CD8-positive, alpha-beta memory T cell (primary cell): ENCODE measurements at regions of chr6 and their contacts with region 1.

Region 1: DNA sequence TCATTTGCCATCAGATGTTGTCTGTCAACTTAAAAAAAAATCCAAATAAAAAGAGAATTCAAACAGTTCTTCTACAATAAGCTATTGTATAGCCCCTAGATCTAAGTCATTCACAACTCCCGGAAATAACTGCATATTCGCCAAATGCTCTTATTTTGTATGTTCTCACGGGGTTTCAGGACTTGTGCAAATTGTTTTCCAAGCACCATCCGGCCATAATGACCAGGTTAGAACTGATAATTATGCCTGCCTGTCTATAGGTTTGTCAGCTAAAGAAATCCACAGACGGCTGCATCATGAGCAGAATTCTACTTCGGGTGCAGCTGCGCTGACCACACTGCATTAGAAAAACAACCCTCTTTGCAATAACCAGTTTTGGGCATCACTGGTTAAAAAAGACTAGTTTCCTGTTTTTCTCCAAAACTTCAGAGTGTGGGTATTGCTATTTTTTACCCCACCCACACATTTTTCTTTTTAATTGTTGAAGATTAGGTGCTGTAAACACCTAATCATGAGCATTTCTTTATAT is 87.7 kb downstream of the HIVEP2 start:
- DNase-seq: peak in 1 of 5 donors; percentile 70
- H3K4me3 ChIP-seq: peak overlapping the region; percentile 52
- H3K4me3 Mint-ChIP-seq: peak overlapping the region; percentile 75 to 91 (median 86)
- H3K27ac ChIP-seq: peak overlapping the region; percentile 62
- H3K27ac Mint-ChIP-seq: peak overlapping the region; percentile 88 to 99 (median 96)
- H3K4me1 ChIP-seq: peaks cover 82% of the 10 kb centered on the region
- H3K4me1 Mint-ChIP-seq: peaks cover 83 to 96% (median 95%) of the 10 kb centered on the region in 3 donors
- H3K27me3 ChIP-seq: no peaks in the 10 kb centered on the region
- H3K27me3 Mint-ChIP-seq: no peaks in the 10 kb centered on the region

Region 2: DNA sequence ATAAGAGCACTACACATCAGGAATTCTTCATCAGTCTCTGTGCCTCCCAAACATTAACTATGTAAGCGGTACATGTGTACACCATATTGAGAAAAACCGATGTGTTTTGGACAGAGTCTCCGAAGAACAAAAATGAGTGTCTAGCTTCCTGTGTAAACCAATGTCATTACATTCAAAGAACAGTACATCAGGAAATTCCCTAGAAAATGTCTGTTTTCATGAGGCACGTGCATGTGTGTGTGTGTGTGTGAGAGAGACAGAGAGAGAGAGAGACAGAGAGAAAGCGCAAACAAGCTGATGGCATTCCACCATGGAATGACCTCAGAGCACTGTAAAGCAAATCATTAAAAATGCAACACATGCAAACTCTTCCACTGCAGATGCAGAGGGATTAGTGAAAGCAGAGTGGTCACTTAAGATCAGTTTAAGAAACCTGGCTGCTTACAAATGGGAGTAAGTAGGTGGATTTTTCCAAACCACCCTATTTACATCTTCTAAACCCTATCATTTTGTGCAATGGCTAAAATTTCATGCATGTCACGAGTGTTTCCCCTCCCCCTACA is 46.3 kb before region 1 on chr6:
- CTCF ChIA-PET with region 1: no interaction called
- POLR2A ChIA-PET with region 1: interaction called, 16 read pairs
- DNase-seq: no peak
- H3K4me3 ChIP-seq: no peak overlapping the region
- H3K4me3 Mint-ChIP-seq: peak overlapping the region in 3 of 7 donors; percentile 2 to 21 (median 7)
- H3K27ac ChIP-seq: no peak overlapping the region
- H3K27ac Mint-ChIP-seq: peak overlapping the region in 7 of 8 donors; percentile 33 to 79 (median 52)
- H3K4me1 ChIP-seq: peaks cover 32% of the 10 kb centered on the region
- H3K4me1 Mint-ChIP-seq: peaks cover 65 to 94% (median 88%) of the 10 kb centered on the region in 3 donors
- H3K27me3 ChIP-seq: no peaks in the 10 kb centered on the region
- H3K27me3 Mint-ChIP-seq: no peaks in the 10 kb centered on the region

Region 3: DNA sequence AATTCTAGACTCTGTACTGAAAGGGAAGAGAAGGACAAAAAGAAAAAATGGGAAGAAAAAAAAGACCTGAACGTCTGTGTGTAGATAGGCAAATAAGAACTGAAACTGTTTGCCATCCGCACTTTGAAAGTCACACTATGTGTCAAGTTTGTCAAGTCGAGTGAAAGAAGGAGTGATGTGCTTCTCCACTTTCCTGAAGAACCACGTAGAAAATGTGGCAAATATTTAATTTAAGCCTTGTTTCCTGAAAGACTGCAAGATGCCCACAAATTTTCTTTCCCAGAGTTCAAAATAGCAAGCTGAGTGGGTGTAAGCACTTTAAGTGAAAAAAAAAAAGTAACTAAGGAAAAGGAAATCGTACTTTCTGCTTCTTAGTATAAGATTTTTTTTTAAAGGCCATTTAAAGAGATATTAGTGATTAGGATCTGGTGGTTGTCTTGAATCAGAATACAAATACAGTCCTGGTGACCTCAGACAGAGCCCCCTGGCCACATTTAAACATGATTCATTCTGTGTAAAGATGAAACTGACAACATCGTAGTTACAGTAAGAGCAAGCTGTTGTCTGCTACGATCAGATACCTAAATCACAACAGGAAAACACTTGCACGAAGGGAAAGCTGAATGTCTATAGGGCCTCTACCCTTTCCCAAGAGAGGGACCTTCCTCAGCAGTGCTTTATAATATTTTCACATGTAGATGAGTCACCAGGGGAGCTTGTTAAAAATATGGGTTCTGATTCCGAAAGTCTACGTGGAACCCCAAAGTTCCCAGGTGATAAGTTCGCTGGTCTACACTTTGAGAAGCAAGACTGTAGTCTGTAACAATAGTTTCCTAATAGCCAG is 14.7 kb before region 1 on chr6:
- CTCF ChIA-PET with region 1: interaction called, 14 read pairs
- POLR2A ChIA-PET with region 1: interaction called, 26 read pairs
- DNase-seq: peak in 4 of 5 donors; percentile 22 to 71 (median 48)
- H3K4me3 ChIP-seq: peak overlapping the region; percentile 48
- H3K4me3 Mint-ChIP-seq: peak overlapping the region; percentile 83 to 95 (median 90)
- H3K27ac ChIP-seq: peak overlapping the region; percentile 49
- H3K27ac Mint-ChIP-seq: peak overlapping the region; percentile 91 to 99 (median 96)
- H3K4me1 ChIP-seq: peaks cover 76% of the 10 kb centered on the region
- H3K4me1 Mint-ChIP-seq: peaks cover 79 to 95% (median 92%) of the 10 kb centered on the region in 3 donors
- H3K27me3 ChIP-seq: no peaks in the 10 kb centered on the region
- H3K27me3 Mint-ChIP-seq: no peaks in the 10 kb centered on the region

Region 4: DNA sequence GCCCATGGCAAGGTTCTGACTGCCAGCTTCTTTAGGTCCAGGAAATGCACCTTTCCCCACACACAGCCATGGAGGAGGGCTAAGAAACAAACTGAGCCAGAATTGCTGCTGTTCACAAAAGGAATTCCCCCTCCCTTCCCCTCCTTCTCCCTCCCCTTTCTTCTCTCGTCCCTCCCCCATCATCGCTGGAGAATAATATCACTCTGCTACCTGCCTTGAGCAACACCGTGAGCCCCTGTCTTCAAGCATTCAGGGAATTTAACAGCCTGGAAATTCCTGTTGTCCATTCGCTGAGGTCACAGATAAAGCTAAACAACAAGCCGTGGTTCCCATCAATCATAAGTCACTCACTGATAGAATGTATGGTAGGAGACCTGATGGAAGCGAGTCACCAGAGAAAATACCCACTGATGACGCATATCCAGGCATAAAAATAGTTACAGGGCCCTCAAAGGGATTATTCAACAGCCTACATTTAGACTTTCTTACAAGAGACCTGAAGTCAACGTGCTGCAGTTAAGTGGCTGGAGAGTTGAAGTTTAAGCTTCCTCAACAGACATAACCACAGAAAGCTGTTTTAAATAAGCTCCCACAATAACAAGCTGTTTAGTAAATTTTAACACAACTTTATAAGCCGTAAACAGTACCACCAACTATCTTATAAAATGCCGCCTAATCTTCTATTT is 28.0 kb after region 1 on chr6:
- CTCF ChIA-PET with region 1: interaction called, 12 read pairs
- POLR2A ChIA-PET with region 1: interaction called, 4 read pairs
- DNase-seq: peak; percentile 14 to 84 (median 62)
- H3K4me3 ChIP-seq: peak overlapping the region; percentile 59
- H3K4me3 Mint-ChIP-seq: peak overlapping the region; percentile 67 to 96 (median 87)
- H3K27ac ChIP-seq: peak overlapping the region; percentile 55
- H3K27ac Mint-ChIP-seq: peak overlapping the region; percentile 87 to 100 (median 99)
- H3K4me1 ChIP-seq: peaks cover 78% of the 10 kb centered on the region
- H3K4me1 Mint-ChIP-seq: peaks cover 86 to 99% (median 97%) of the 10 kb centered on the region in 3 donors
- H3K27me3 ChIP-seq: no peaks in the 10 kb centered on the region
- H3K27me3 Mint-ChIP-seq: no peaks in the 10 kb centered on the region

Region 5: GRCh38 chr6:142946181-142946923 is 89.1 kb after region 1 on chr6:
- CTCF ChIA-PET with region 1: interaction called, 4 read pairs
- POLR2A ChIA-PET with region 1: interaction called, 14 read pairs
- DNase-seq: peak; percentile 91 to 95 (median 93)
- H3K4me3 ChIP-seq: peak overlapping the region; percentile 89
- H3K4me3 Mint-ChIP-seq: peak overlapping the region; percentile 94 to 100 (median 96)
- H3K27ac ChIP-seq: peak overlapping the region; percentile 98
- H3K27ac Mint-ChIP-seq: peak overlapping the region; percentile 98 to 100 (median 99)
- H3K4me1 ChIP-seq: peaks cover 34% of the 10 kb centered on the region
- H3K4me1 Mint-ChIP-seq: peaks cover 36 to 39% (median 38%) of the 10 kb centered on the region in 3 donors
- H3K27me3 ChIP-seq: no peaks in the 10 kb centered on the region
- H3K27me3 Mint-ChIP-seq: peaks cover 0 to 4% of the 10 kb centered on the region in 2 donors